Activated naive CD4-positive, alpha-beta T cell treated with anti-CD3 and anti-CD28 coated beads for 36 hours (primary cell): ENCODE measurements at regions of chr11 and their contacts with region 1.

Region 1: DNA sequence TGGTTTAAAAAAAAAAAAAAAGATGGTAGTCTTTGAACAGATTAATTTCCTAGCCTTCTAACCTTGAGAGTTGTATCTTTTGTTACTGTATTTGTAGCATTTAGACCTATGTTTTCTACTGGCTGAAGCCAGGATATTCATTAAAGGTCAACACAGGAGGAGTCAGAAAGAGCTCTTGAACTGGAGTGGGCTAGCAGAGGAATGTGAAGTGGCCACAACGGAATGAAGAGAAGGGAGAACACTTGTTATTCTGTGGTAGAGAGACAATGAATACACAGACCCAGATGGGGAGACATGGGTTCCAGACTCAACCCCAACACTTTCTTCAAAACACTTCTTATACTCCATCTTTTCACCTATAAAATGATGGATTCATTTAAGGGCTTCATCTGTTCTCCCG is 88.1 kb downstream of the RELT start:
- DNase-seq: no peak
- H3K4me3 Mint-ChIP-seq: no peak overlapping the region
- H3K27ac Mint-ChIP-seq: no peak overlapping the region
- H3K4me1 Mint-ChIP-seq: no peaks in the 10 kb centered on the region
- H3K27me3 Mint-ChIP-seq: no peaks in the 10 kb centered on the region

Region 2: GRCh38 chr11:73453562-73453961 is 10.8 kb before region 1 on chr11:
- CTCF ChIA-PET with region 1: interaction called, 10 read pairs
- intact Hi-C with region 1: no loop called
- DNase-seq: no peak
- H3K4me3 Mint-ChIP-seq: no peak overlapping the region
- H3K27ac Mint-ChIP-seq: no peak overlapping the region
- H3K4me1 Mint-ChIP-seq: no peaks in the 10 kb centered on the region
- H3K27me3 Mint-ChIP-seq: no peaks in the 10 kb centered on the region

Region 3: GRCh38 chr11:73493956-73494598 is 29.7 kb after region 1 on chr11:
- CTCF ChIA-PET with region 1: no interaction called
- intact Hi-C with region 1: no loop called
- DNase-seq: no peak
- H3K4me3 Mint-ChIP-seq: no peak overlapping the region
- H3K27ac Mint-ChIP-seq: no peak overlapping the region
- H3K4me1 Mint-ChIP-seq: peaks cover 3% of the 10 kb centered on the region
- H3K27me3 Mint-ChIP-seq: no peaks in the 10 kb centered on the region